Right cardiac atrium (tissue), 5 donors: ENCODE measurements at regions of chr11 and their contacts with region 1.

Region 1: DNA sequence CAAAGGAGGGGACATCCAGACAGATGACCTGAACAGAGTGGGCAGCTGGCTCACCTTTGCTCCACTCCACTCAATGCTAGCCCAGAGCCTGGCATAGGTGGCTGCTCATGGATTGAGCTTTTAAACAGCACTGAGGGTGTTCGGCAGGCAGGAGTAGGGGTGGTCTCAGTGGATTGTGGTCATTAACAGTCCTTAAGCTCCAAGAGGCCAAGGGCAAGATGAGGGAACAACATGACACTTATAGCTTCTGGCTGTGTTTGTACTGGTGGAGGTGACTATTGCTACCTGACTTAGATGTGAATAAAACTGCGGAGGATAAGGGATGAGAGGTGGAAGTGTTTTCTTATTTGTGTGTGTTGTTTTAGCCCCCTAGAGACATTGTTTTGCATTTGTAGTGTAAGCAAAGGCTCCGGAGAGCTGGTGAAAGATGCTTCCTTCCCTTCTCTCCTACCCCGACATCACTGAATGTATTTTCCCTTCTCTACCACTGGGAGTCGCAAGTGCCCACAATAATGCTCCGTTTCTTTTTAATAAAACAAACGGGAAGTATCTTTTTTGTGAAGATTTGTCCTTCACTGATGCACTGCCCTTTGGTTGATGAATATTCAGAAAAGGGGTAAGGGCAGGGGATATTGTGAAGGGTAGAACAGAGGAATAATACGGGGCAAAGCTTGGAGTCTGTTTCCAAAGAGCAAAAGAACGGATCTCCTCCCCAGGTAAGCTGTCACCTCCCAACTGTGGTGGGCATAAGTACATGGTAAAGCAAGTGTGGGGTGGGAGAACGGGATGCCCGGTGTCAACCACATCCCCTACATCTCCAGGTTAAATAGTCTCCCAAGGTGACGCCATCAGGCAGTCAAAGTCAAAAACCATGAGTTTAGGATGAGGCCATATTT is 27.5 kb upstream of the MTNR1B start:
- DNase-seq: no peak
- ATAC-seq: no peak
- H3K4me3 ChIP-seq: no peak overlapping the region
- H3K27ac ChIP-seq: no peak overlapping the region
- H3K4me1 ChIP-seq: no peaks in the 10 kb centered on the region
- H3K27me3 ChIP-seq: no peaks in the 10 kb centered on the region

Region 2: DNA sequence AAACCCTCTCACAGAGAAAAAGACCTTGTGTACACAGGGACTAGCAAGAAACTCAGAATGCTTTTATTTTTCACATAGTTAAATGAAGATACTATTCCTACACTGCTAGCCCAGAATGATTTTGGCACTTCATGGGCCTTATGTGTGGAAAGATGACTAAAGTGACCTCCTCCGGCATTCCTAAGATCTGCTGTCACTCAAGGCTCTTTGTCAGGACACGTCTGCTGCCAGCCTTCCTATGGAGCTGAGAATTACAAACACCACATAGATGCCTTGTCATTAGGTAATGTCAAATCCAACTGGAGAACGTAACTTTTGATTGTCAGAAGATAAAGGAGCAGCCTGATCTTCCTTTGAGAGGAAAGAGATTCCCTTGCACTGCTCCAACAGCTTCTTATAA is 468.2 kb before region 1 on chr11:
- intact Hi-C with region 1: no loop called
- DNase-seq: no peak
- ATAC-seq: no peak
- H3K4me3 ChIP-seq: no peak overlapping the region
- H3K27ac ChIP-seq: no peak overlapping the region
- H3K4me1 ChIP-seq: peaks cover 2% of the 10 kb centered on the region
- H3K27me3 ChIP-seq: no peaks in the 10 kb centered on the region

Region 3: GRCh38 chr11:92717240-92717639 is 224.7 kb before region 1 on chr11:
- intact Hi-C with region 1: no loop called
- DNase-seq: no peak
- ATAC-seq: no peak
- H3K4me3 ChIP-seq: no peak overlapping the region
- H3K27ac ChIP-seq: no peak overlapping the region
- H3K4me1 ChIP-seq: no peaks in the 10 kb centered on the region
- H3K27me3 ChIP-seq: no peaks in the 10 kb centered on the region

Region 4: DNA sequence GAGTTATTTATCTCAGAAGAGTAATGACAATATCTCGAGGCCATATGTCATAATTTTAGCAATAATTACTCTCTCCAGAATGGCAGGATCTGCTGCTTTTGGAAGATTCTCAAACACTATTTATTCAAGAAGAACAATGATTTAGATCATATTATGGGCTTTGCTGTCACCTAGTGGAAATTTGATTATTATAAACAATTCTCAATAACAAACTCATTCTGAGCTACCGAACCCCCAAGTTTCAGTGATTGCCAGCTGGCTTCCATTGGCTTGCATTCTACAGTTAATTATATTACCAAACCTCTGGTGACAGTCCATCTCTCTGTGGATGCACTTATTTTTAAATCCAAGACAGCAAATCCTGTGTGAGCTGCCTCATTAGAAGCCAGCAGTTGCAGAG is 283.7 kb after region 1 on chr11:
- intact Hi-C with region 1: loop called in 3 of 4 experiments (anchors 5 to 10 kb)
- DNase-seq: no peak
- ATAC-seq: no peak
- H3K4me3 ChIP-seq: no peak overlapping the region
- H3K27ac ChIP-seq: no peak overlapping the region
- H3K4me1 ChIP-seq: no peaks in the 10 kb centered on the region
- H3K27me3 ChIP-seq: no peaks in the 10 kb centered on the region